ENCODE measurements at regions of chr21 and their contacts with region 1.

Region 1: GRCh38 chr21:34630536-34631143 is 15.7 kb upstream of the RCAN1 start:
- DNase-seq: peak; percentile 83
- H3K4me3 Mint-ChIP-seq: no peak overlapping the region
- H3K27ac Mint-ChIP-seq: no peak overlapping the region
- H3K4me1 Mint-ChIP-seq: no peaks in the 10 kb centered on the region
- H3K27me3 Mint-ChIP-seq: peaks cover 26% of the 10 kb centered on the region

Region 2: DNA sequence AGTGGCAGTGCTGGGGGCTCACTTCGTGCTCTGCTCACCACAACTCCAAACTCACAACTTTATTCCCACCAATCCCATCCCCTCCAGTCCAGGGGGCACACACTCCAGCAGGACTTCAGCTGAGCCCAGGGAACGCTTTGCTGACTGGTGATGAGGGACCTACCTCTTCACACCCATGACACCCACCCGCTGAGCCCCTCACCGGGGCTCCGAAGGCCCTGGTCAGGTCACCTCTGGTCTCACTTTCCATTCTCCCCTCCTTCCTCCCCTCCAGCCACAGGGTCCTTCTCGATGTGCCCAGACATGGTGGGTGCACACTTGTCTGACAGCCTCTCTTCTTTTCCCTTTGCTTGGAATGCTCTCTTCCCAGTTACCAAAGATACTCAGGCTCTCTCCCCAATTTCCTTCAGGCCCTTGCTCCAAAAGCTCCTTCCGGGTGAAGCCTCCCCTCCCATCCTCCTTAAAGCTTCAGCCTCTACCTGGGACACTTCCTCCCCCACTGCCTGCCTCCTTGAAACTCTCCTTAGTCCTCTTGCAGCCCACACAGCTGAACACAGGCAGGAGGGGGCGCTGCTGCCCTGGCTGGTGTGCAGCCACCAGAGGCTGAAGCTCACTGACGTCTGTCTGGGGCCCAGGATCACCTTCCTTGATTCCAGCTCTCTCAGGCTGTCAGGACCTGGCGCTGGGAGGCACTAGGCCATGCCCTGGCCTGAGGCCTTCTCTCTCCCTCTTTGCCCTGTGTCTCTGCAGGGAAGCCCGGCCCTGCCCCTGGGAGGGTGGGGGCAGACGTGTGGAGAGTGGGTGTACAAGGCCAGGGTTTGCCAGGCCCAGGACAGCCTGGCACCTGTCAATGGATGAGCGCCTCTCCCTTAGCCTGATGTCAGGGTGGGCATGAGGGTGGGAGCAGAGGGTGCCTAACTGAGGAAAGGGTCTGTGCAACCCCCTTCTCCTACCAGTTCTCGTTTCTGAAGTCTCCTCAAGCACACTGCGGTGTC is 120.2 kb before region 1 on chr21:
- intact Hi-C with region 1: loop called (anchors 1 kb)
- DNase-seq: peak; percentile 72
- H3K4me3 Mint-ChIP-seq: no peak overlapping the region
- H3K27ac Mint-ChIP-seq: no peak overlapping the region
- H3K4me1 Mint-ChIP-seq: no peaks in the 10 kb centered on the region
- H3K27me3 Mint-ChIP-seq: no peaks in the 10 kb centered on the region

Region 3: DNA sequence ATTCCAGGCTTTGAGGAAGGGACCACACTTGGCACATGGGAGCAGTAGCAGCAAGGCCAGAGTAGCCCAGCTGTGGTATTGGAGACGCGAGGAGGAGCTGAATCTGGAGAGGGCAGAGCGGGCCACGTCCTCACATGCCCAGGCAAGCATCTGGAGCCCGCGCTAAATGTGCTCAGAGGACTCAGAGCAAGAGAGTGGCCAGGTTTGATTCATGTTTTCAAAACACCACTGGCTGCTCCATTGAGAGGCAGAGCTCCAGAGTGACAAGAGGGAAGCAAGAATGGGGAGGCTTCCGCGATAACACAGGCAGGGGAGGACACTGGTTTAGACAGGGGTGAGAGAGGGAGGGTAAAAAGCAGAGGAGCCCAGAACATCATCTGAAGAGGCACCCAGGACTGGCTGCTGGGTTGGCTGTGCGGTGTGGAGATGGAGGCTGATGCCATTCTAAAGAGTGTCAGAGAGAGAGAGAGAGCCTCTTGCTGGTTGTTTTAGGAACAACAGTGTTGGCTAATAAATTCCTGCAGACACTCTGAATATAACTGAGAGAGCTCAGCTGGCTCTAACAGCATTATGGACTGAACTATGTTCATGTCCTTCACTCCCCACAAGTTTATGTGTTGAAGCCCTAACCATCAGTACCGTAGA is 48.0 kb before region 1 on chr21:
- intact Hi-C with region 1: no loop called
- DNase-seq: no peak
- H3K4me3 Mint-ChIP-seq: no peak overlapping the region
- H3K27ac Mint-ChIP-seq: no peak overlapping the region
- H3K4me1 Mint-ChIP-seq: peaks cover 11% of the 10 kb centered on the region
- H3K27me3 Mint-ChIP-seq: no peaks in the 10 kb centered on the region

Region 4: DNA sequence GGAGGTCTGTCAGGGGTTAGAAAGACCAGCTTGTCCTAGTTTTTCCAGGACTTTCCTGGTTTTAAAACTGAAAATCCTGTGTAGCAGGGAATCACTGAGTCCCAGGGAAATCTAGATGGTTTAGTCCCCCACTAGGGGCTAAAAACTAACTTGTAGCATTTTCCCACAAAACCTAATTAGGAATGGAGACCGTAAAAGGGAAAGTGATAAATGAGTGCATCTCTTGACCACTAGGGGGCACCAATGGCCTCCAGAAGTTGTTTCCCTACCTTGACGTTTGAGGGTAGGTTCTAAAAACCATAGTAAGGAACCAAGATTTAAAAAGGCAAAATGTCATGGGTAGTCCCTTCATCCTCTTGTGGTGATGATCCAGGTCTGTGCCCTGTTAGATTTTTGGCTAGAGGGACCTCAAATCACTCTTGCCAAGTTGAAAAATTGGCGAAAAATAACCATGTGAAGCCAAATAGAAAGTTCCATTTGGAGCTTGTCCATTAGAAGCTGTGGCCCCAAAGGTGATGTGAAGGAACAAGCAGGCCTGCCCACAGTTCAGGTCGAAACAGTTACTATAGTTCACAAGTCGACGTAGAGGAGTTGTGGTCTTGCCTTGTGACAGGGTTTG is 62.7 kb after region 1 on chr21:
- intact Hi-C with region 1: no loop called
- DNase-seq: peak; percentile 83
- H3K4me3 Mint-ChIP-seq: no peak overlapping the region
- H3K27ac Mint-ChIP-seq: no peak overlapping the region
- H3K4me1 Mint-ChIP-seq: peaks cover 2% of the 10 kb centered on the region
- H3K27me3 Mint-ChIP-seq: peaks cover 38% of the 10 kb centered on the region